ENCODE measurements at regions of chr6 and their contacts with region 1.

Region 1: DNA sequence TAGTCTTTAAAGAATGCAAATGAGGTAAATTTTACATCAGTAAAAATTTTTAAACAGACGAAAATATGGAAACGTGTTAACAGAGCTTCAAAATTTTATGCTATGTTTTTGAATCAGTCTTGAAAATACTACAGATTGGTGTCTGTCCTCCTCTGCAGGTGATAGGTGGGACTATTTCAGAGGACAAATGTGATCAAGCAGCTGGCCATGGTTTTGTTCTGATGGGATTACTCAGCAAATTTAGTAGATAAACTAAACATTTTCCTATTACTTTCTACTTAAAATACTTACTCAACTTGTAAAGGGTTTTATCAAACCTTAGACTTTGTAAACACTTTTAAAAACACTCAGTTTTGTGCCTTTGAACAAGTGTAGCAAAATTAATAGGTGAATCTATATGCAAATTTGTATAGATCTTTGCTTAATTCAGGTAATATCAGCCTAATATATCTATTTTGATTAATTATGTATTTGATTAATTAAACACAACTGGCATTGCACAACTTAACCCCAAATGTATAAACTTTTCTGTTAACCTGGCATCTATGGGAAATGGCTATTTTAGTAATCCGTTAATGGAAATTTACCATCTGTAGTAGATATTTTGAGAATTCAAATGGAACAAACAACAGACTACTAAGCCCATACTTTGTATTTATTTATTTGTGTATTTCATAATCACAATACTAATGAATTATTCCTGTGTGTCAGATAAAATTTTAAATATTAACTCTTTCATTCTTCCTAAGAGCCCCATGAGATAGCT is 22.5 kb downstream of the ADGRB3 start:
- DNase-seq: no peak
- ATAC-seq: no peak
- H3K4me3 ChIP-seq: no peak overlapping the region
- H3K4me3 Mint-ChIP-seq: no peak overlapping the region
- H3K27ac ChIP-seq: no peak overlapping the region
- H3K27ac Mint-ChIP-seq: no peak overlapping the region
- H3K4me1 ChIP-seq: no peaks in the 10 kb centered on the region
- H3K4me1 Mint-ChIP-seq: no peaks in the 10 kb centered on the region
- H3K27me3 ChIP-seq: no peaks in the 10 kb centered on the region
- H3K27me3 Mint-ChIP-seq: no peaks in the 10 kb centered on the region
- CTCF ChIP-seq: no peak

Region 2: DNA sequence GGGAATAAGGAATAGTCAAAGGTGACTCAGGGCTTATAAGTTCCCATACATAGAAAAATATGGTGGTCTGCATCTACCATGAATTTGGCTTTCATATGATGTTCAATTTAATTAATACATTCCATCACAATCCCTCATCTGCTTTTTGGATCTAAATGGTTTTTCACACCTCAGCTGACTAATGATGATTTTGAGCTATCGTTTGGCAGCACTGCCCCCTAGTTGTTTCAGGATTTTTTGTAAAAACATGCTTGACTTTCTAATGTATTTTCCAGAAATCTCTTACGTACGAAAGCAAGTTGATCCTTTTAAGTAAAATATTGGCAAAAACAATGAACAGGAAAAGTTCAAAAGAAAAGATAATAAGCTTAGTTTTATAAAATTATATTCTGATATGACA is 431.1 kb before region 1 on chr6:
- CTCF ChIA-PET with region 1: no interaction called
- POLR2A ChIA-PET with region 1: no interaction called
- intact Hi-C with region 1: no loop called
- DNase-seq: no peak
- ATAC-seq: no peak
- H3K4me3 ChIP-seq: no peak overlapping the region
- H3K4me3 Mint-ChIP-seq: no peak overlapping the region
- H3K27ac ChIP-seq: no peak overlapping the region
- H3K27ac Mint-ChIP-seq: no peak overlapping the region
- H3K4me1 ChIP-seq: no peaks in the 10 kb centered on the region
- H3K4me1 Mint-ChIP-seq: no peaks in the 10 kb centered on the region
- H3K27me3 ChIP-seq: no peaks in the 10 kb centered on the region
- H3K27me3 Mint-ChIP-seq: no peaks in the 10 kb centered on the region
- CTCF ChIP-seq: no peak

Region 3: GRCh38 chr6:68689910-68690309 is 32.4 kb after region 1 on chr6:
- CTCF ChIA-PET with region 1: no interaction called
- POLR2A ChIA-PET with region 1: no interaction called
- intact Hi-C with region 1: loop called (anchors 2 kb)
- DNase-seq: no peak
- ATAC-seq: no peak
- H3K4me3 ChIP-seq: no peak overlapping the region
- H3K4me3 Mint-ChIP-seq: no peak overlapping the region
- H3K27ac ChIP-seq: no peak overlapping the region
- H3K27ac Mint-ChIP-seq: no peak overlapping the region
- H3K4me1 ChIP-seq: no peaks in the 10 kb centered on the region
- H3K4me1 Mint-ChIP-seq: no peaks in the 10 kb centered on the region
- H3K27me3 ChIP-seq: no peaks in the 10 kb centered on the region
- H3K27me3 Mint-ChIP-seq: no peaks in the 10 kb centered on the region
- CTCF ChIP-seq: no peak